GM18951 (cell line): ENCODE measurements at regions of chr4 and their contacts with region 1.

Region 1: DNA sequence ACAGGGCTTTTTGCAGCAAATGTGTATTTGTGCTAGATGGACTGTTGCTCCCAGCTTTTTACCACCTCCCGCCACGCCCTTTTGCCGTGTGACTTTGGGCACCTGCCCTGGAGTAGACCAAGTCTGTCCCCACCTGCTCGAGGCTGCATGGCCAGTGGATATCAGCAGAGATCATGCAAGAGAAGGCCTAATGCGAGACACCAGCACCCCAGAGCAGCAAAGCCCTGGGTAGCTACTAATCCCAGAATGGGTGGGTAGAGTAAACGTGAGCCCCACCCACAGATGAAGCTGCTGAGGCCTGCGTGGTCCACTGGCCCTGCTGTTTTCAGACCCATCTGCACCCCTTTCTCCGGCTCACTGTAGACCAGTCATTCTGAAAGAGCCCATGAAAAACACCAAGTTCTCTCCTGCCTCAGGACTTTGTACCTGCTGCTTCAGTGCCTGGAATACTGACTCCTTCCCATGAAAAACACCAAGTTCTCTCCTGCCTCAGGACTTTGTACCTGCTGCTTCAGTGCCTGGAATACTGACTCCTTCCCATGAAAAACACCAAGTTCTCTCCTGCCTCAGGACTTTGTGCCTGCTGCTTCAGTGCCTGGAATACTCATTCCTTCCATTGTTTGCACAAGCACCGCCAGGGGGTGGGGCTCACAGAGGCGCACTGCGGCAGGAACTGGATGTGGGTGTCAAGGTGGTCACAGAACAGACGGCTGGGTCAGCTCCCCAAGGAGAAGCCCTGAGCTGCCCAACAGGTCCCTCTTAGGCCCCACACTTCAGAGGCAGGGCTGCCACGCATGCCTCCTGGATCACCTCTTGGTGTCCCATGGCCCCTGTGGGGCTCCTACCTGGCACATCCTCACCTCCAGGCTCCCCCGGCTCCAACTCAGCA is 5.1 kb upstream of the TNIP2 start:
- POLR2A ChIP-seq: no peak

Region 2: GRCh38 chr4:2637956-2638552 is 123.2 kb before region 1 on chr4:
- in situ Hi-C with region 1: no loop called
- POLR2A ChIP-seq: no peak

Region 3: DNA sequence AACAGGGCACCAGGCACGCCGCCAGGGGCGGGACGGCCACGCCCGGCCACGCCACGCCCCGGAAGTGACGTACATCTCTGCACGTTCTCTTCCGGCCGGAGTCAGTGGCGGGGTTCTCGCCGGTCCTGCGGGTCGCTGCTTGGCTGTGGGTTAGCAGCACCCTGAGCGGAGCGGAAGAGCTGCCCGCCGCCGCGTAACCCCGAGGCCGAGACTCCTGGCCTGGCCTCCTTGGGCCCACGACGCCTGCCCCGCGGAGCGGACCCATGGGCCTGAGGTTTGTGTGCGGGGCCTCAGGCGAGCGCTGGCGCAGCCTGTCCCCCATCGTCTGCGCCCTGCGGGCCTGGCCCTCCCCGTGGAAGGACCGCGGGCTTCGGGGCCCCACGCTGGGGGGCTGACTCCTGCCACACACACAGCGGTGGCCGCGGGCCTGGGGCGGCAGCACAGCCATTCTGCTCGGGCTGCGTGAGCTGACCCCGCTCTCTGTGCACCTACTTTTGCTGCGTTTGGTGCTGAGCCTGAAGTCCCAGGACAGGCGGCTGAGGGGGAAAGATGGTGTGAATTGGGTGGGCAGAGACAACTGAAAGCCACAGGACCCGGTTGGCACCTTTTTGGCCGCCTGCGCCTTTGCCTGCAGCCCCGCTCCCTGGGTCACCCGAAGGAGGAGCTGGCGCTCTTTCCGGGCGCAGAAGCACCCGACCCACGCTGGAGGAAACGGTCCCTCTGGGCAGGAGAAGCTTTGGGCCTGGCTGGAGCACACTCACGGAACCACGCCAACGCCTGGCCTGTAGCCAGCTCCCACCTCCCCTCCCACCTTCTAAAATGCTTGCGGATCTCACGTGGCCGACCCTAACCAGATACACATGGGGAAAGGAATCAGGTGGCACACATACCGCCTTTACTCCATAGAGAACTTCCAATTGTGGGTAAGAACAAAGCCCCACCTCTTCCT is 173.8 kb after region 1 on chr4:
- in situ Hi-C with region 1: loop called (anchors 10 kb)
- POLR2A ChIP-seq: peak; percentile 95